H1 (cell line): ENCODE measurements at regions of chr6 and their contacts with region 1.

Region 1: DNA sequence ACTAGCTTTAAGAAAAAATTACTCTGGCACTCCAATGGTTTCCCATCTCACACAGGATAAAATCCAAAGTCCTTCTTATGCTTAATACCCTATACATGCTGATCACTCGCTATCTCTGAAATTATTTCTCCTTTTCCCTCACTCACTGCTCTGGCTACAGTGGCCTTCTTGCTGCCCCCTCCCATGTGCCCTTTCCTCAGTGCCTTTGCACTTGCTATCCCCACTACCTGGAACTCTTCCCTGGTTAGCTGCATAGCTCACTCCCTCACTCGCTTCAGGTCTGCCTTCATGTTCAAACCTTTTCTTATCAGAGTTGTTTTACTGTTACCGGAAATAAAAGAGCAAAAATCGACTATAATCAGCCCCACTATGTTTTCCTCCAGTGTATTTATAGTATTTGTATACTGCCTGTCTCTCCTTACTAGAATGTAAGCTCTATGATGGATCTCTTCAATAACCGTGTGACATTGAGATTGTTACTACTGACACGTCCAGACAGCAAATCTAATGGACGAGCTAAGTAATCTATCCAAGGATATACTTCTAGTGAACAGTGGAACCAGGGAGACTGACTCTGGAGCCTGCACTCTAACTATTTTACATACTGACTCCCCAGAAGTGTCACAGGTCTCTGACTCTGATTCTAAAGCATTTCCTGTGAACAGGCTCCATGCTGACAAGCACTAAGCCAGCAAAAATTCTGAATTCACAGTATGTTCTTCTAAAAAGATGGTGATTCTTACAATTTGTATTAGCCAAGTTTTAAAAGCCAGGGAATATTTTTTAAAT is 25.1 kb downstream of the FKBP5 start:
- DNase-seq: no peak
- H3K4me3 ChIP-seq: no peak overlapping the region
- H3K27ac ChIP-seq: no peak overlapping the region
- H3K4me1 ChIP-seq: peaks cover 2 to 8% (median 4%) of the 10 kb centered on the region in 4 experiments; a peak in 4 of 7 replicates
- H3K27me3 ChIP-seq: no peaks in the 10 kb centered on the region
- CTCF ChIP-seq: no peak
- EP300 ChIP-seq: no peak
- POLR2A ChIP-seq: no peak
- RAD21 ChIP-seq: no peak

Region 2: GRCh38 chr6:35522660-35523658 is 140.7 kb before region 1 on chr6:
- CTCF ChIA-PET with region 1: no interaction called
- POLR2A ChIA-PET with region 1: no interaction called
- DNase-seq: peak; percentile 53 to 91
- H3K4me3 ChIP-seq: no peak overlapping the region
- H3K27ac ChIP-seq: no peak overlapping the region
- H3K4me1 ChIP-seq: peaks cover 0 to 13% (median 8%) of the 10 kb centered on the region in 4 experiments; a peak in 6 of 7 replicates
- H3K27me3 ChIP-seq: 0 out of 7 replicates have a peak, but pooled peaks cover 0 to 2% (median 0%) of the 10 kb centered on the region in 4 experiments
- CTCF ChIP-seq: peak; percentile 94 to 98 (median 94)
- EP300 ChIP-seq: no peak
- POLR2A ChIP-seq: no peak
- RAD21 ChIP-seq: peak; percentile 92 to 96

Region 3: GRCh38 chr6:35640017-35640664 is 23.5 kb before region 1 on chr6:
- CTCF ChIA-PET with region 1: interaction called, 12 read pairs
- POLR2A ChIA-PET with region 1: interaction called, 3 read pairs
- DNase-seq: no peak
- H3K4me3 ChIP-seq: no peak overlapping the region
- H3K27ac ChIP-seq: no peak overlapping the region
- H3K4me1 ChIP-seq: peaks cover 0 to 3% (median 0%) of the 10 kb centered on the region in 4 experiments; a peak in 2 of 7 replicates
- H3K27me3 ChIP-seq: no peaks in the 10 kb centered on the region
- CTCF ChIP-seq: no peak
- EP300 ChIP-seq: no peak
- POLR2A ChIP-seq: no peak
- RAD21 ChIP-seq: no peak